AG04450 (cell line): ENCODE measurements at regions of chr14 and their contacts with region 1.

Region 1: DNA sequence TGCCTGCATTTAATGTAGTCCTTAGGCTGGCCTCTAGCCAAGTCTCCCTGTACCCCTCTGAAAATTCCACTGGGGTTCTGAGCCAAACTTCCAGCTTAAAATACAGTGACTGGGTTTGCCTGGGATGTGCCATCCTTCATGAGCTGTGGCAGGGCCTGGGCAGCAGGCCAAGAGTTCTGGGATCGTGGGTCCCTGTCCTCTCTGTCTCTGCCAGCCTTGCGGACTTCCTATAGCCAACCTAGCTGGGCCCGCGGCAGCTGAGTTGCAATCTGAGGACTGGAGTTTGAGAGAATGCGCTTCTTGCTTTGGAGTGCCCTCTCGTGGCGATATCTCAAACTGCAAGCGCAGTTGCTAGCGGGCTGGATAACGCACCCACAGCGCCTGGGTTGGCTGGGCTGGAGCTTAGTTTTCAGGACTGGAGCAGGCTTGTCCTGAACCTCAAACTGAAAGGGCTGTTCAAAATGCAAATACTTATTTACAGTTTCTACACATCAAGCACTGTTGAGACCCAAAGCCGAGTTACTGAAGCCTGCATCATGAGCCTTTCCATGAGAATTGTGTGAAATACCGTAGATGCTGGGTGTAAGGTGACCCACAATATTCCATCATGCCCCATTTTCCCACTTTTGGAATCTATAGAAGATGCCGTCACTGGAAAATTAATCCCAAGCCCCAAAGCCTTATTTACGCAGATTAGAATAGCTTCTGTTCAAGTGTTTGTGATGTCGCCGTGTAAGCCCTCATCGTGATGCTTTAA is 7.3 kb upstream of the IFI27L2 start:
- DNase-seq: peak; percentile 57
- H3K4me3 ChIP-seq: no peak overlapping the region
- H3K27ac ChIP-seq: no peak overlapping the region
- H3K27me3 ChIP-seq: peaks cover 5% of the 10 kb centered on the region
- CTCF ChIP-seq: peak; percentile 99

Region 2: GRCh38 chr14:93970549-93970946 is 166.2 kb before region 1 on chr14:
- CTCF ChIA-PET with region 1: no interaction called
- POLR2A ChIA-PET with region 1: no interaction called
- DNase-seq: no peak
- H3K4me3 ChIP-seq: no peak overlapping the region
- H3K27ac ChIP-seq: no peak overlapping the region
- H3K27me3 ChIP-seq: no peaks in the 10 kb centered on the region
- CTCF ChIP-seq: peak; percentile 28

Region 3: GRCh38 chr14:94026173-94026888 is 110.4 kb before region 1 on chr14 and contains the start of gene OTUB2:
- CTCF ChIA-PET with region 1: interaction called, 15 read pairs
- POLR2A ChIA-PET with region 1: no interaction called
- DNase-seq: peak; percentile 95
- H3K4me3 ChIP-seq: peak within 1 kb of the TSS; percentile 66
- H3K27ac ChIP-seq: no peak within 1 kb of the TSS
- H3K27me3 ChIP-seq: no peaks in the 10 kb centered on the region
- CTCF ChIP-seq: no peak
- polyA plus RNA-seq, gene OTUB2: 2.1 and 2.3 TPM in 2 replicates

Region 4: DNA sequence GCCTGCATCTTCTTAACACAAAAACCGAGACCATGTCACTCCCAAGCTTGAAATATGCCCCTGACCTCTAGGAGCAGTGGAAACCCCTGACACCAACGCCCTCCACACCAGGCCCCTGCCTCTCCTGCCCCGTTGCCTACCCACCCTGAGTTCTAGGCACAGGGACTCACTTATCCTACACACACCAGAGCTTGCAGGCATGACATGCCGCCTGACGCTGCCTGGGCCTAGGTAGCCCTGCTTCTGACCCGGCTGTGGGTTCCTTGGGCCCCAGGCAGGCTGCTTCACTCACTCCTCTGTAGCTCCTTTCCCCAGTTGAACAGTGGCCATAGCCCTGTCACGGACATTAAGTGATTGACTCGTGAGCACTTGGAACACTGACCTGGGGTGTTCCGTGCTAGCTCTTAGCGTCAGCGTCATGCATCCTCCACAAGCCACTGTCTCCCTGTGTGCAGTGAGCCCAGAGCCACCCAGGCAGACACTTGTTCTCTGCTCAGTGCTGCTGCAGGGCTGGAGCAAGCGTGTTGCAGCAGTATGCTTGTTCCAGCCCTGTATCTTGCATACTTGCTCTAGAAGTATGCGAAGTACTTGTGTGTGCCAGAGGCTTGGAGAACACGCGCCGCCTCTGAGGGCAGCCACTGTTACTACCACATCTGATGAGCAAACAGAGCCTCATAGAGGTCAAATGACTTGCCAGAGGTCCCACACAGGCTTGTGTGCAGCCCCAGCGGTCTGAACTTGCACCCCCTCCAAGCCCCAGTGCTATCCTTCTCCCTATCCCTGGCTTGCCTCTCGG is 95.0 kb before region 1 on chr14:
- CTCF ChIA-PET with region 1: interaction called, 183 read pairs
- POLR2A ChIA-PET with region 1: no interaction called
- DNase-seq: peak; percentile 46
- H3K4me3 ChIP-seq: no peak overlapping the region
- H3K27ac ChIP-seq: no peak overlapping the region
- H3K27me3 ChIP-seq: no peaks in the 10 kb centered on the region
- CTCF ChIP-seq: no peak

Region 5: DNA sequence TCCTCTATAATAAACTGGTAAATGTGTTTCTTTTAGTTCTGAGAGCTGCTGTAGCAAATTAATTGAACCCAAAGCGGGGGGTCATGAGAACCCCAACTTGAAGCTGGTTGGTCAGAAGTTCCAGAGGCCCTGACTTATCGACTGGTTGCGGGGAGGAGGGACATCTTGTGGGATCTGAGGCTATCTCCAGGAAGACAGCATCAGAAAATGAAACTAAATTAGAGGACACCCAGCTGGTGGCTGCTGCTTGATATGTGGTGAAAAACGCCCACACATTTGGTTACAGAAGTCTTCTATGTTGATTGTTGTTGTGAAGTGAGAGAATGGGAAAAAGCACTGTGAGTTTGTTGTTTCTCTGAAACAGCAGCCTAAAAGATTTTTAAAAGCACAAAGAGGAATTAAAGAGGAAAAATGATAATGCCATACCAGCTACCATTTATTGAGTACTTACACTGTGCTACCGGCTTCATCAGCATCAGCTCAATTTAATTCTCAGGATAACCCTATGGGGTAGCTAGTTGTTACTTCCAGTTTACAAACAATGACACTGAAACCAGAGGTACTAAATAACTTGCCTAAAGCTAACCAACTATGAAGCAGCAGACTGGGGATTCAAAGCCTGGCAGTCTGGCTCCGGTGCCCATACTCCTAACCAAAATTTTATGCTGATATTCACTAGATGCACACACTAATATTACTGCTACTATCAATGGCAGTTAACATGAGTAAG is 80.0 kb before region 1 on chr14:
- CTCF ChIA-PET with region 1: interaction called, 68 read pairs
- POLR2A ChIA-PET with region 1: no interaction called
- DNase-seq: no peak
- H3K4me3 ChIP-seq: no peak overlapping the region
- H3K27ac ChIP-seq: no peak overlapping the region
- H3K27me3 ChIP-seq: no peaks in the 10 kb centered on the region
- CTCF ChIP-seq: no peak

Region 6: DNA sequence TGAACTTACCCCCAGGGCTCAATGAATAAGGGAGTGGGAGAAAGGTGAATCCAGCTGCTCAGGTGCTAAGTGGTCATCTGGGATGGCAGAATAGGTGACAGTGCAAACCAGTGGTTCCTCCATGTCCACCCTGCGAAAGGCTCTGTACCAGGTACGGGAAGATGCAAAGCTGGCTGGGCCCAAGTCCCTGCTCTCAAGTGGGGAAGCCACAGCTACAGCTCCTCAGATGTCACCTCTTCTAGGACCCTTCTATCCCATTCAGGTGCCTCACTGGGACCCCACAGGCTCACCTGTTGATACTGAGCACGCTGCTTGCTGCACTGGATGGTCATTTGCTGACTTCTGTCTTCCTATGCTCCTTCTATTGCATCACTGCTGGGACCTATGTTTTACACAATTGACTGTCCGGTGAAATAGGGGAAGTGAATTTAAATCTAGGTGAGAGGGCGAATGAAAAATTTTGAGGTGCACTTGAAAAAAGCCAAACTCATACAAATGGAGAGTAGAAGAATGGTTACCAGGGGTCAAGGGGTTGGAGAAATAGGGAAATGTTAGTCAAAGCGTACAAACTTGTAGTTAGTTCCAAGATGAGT is 17.1 kb after region 1 on chr14:
- CTCF ChIA-PET with region 1: interaction called, 11 read pairs
- POLR2A ChIA-PET with region 1: no interaction called
- DNase-seq: no peak
- H3K4me3 ChIP-seq: no peak overlapping the region
- H3K27ac ChIP-seq: no peak overlapping the region
- H3K27me3 ChIP-seq: peaks cover 16% of the 10 kb centered on the region
- CTCF ChIP-seq: no peak

Region 7: GRCh38 chr14:94171208-94171607 is 34.5 kb after region 1 on chr14:
- CTCF ChIA-PET with region 1: interaction called, 20 read pairs
- POLR2A ChIA-PET with region 1: no interaction called
- DNase-seq: no peak
- H3K4me3 ChIP-seq: no peak overlapping the region
- H3K27ac ChIP-seq: no peak overlapping the region
- H3K27me3 ChIP-seq: peaks cover 14% of the 10 kb centered on the region
- CTCF ChIP-seq: no peak

Region 8: DNA sequence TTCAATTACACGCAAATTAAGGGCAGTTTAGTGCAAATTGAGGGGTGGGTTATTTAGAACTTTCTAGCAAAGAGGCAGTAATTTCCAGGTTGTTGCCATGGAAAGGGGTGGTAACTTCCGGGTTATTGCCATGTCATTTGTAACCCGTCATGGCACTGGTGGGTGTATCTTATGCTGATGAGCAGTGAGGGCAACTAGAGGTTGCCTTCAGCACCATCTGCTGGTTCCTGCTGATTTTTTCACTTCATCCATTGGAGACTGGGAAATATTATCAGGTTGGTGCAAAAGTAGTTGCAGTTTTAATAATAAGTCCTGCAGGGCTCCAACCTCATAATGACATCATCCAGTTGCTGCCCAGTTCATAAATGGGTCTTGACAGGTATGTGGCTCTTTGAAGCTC is 400.1 kb after region 1 on chr14:
- CTCF ChIA-PET with region 1: no interaction called
- POLR2A ChIA-PET with region 1: no interaction called
- DNase-seq: no peak
- H3K4me3 ChIP-seq: no peak overlapping the region
- H3K27ac ChIP-seq: no peak overlapping the region
- H3K27me3 ChIP-seq: peaks cover 2% of the 10 kb centered on the region
- CTCF ChIP-seq: no peak